ENCODE measurements at regions of chr3 and their contacts with region 1.

Region 1: GRCh38 chr3:60160111-60160821 is 1091.0 kb downstream of the FHIT start:
- DNase-seq: no peak
- ATAC-seq: no peak
- H3K4me3 ChIP-seq: no peak overlapping the region
- H3K27ac ChIP-seq: no peak overlapping the region
- H3K4me1 ChIP-seq: no peaks in the 10 kb centered on the region
- H3K27me3 ChIP-seq: no peaks in the 10 kb centered on the region
- CTCF ChIP-seq: no peak
- POLR2A ChIP-seq: no peak
- RAD21 ChIP-seq: no peak

Region 2: DNA sequence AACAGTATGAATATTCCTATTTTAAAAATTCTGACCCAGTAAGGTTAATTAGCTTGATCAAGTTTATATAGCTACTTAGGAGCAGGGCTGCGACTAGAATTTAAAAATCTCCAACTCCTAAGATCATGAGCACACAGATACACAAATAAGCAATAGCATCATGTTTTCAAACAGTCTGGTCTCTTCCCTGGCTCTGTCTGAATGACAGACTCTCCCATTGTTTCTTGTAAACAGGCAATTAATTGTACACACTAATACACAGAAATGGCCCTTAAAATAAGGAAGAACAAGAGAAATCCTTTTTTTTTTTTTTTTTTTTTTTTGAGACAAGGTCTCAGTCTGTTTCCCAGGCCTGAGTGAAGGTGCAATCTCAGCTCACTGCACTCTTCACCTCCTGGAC is 46.1 kb before region 1 on chr3:
- CTCF ChIA-PET with region 1: no interaction called
- POLR2A ChIA-PET with region 1: interaction called, 19 read pairs
- dilution Hi-C with region 1: no loop called
- in situ Hi-C with region 1: no loop called
- intact Hi-C with region 1: no loop called
- DNase-seq: no peak
- ATAC-seq: no peak
- H3K4me3 ChIP-seq: no peak overlapping the region
- H3K27ac ChIP-seq: no peak overlapping the region
- H3K4me1 ChIP-seq: no peaks in the 10 kb centered on the region
- H3K27me3 ChIP-seq: no peaks in the 10 kb centered on the region
- CTCF ChIP-seq: no peak
- POLR2A ChIP-seq: no peak
- RAD21 ChIP-seq: no peak

Region 3: DNA sequence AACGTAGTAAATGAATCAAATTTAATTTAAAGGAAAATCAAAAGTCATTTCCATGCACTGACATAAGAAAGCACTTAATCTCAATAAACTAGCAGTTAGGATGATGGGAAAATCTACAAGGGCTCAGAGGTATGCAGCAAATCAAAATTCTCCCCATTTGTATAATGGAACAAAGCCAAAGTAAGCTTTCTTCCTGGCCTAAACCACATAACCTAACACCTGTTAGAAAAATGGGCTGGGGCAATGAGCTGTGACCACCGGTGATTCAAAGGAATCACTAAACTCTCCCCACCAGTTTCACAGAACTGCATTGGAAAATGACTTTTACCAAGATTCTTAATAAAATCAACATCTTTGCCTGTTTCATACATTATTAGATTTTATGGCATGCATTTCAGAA is 66.6 kb after region 1 on chr3:
- CTCF ChIA-PET with region 1: no interaction called
- POLR2A ChIA-PET with region 1: no interaction called
- dilution Hi-C with region 1: no loop called
- in situ Hi-C with region 1: no loop called
- intact Hi-C with region 1: no loop called
- DNase-seq: no peak
- ATAC-seq: no peak
- H3K4me3 ChIP-seq: no peak overlapping the region
- H3K27ac ChIP-seq: no peak overlapping the region
- H3K4me1 ChIP-seq: no peaks in the 10 kb centered on the region
- H3K27me3 ChIP-seq: no peaks in the 10 kb centered on the region
- CTCF ChIP-seq: no peak
- POLR2A ChIP-seq: no peak
- RAD21 ChIP-seq: no peak